ENCODE measurements at regions of chr17 and their contacts with region 1.

Region 1: DNA sequence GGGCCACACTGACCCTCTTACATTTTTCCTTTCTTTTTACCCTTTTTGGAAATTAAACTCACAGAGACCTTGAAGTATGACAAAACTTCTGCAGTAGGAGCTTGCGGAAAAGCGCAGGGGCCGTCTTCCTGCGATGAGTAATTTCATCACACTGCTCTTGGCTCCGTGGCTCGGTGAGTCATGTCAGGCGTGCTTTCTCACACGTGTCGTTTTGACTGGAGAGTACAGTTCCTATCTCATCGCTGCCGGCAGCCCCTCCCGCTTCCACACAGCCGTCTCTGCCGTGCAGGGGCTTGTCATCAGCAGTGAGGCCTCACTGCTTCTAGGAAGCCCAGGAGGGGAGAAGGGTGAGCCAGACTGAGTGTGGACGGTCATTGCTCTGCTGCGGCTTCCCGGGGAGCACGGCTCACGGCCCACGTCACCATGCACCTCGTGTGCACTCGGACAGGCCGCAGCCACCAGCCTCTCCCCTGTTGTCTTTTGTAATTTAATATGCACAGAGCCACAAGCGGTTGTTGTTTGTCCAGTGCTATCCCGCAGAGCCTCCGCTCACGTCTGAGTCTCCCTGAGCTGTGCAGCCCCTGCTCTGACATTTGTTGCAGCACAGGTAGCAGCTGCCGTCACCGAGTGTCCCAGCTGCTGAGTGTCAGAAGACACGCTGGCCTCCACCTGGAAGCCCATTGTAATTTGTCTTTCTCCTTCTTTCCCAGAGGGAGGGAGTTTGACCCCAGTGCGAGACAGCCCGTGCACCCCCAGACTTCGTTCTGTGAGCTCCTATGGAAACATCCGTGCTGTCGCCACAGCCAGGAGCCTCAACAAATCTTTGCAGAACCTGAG is 99.4 kb upstream of the CHMP6 start:
- DNase-seq: peak; percentile 97
- H3K4me3 Mint-ChIP-seq: peak overlapping the region; percentile 23
- H3K27ac Mint-ChIP-seq: peak overlapping the region; percentile 93
- H3K4me1 Mint-ChIP-seq: peaks cover 63% of the 10 kb centered on the region
- H3K27me3 Mint-ChIP-seq: no peaks in the 10 kb centered on the region

Region 2: DNA sequence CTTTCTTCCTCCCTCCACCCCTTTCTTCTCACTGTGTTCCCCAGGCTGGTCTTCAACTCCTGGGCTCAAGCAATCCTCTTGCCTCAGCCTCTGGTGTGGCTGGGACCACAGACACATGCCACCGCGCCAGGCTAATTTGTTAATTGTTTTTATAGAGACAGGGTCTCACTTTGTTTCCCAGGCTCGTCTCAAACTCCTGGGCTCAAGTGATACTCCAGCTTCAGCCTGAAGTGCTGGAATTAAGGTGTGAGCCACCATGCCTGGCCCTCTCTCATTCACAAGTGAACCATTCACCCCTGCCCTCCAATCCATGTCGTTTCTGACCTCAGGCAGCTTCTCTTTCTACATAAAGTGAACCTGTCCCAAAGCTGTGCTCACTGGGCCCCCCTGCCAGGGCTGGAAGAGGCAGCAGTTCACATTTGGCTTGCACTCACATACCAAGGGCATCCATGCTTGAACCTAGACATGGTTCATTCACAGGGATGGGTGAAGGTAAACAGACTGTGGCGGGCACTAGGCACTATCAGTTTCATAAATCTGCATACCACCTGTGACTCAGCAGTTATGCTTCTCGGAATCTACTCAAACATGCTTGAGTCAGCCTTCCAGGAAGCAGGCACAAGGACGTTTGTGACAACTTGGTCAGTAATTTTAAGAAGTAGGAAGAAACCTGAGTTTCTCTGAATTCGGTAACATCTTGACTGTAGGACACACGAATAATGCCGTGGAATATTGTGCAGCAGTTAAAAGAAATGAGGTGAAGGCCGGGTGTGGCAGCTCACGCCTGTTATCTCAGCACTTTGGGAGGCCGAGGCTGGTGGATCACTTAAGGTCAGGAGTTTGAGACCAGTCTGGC is 637.6 kb before region 1 on chr17:
- CTCF ChIA-PET with region 1: no interaction called
- intact Hi-C with region 1: loop called (anchors 5 kb)
- DNase-seq: peak; percentile 90
- H3K4me3 Mint-ChIP-seq: peak overlapping the region; percentile 34
- H3K27ac Mint-ChIP-seq: peak overlapping the region; percentile 92
- H3K4me1 Mint-ChIP-seq: peaks cover 63% of the 10 kb centered on the region
- H3K27me3 Mint-ChIP-seq: no peaks in the 10 kb centered on the region

Region 3: DNA sequence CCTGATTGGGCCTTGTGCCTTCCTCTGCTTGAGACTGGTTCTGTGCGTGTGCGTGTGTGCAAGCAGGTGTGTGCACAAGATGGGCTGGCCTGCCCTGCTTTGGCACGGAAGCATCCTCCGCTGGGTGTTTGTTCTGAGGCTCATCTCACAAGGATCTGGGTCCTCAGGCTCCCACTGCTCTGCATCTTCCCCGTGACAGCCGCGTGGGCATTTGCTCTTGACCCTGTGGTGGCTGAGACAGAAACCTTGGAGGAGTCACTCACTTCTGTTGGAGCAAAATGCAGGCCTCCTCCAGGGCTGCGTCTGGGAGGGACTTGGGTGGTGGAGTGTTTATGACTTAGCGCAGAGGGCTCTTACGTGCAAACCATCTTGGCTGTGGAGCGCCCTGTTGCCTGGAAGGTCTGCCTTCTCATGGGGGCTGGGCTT is 228.4 kb before region 1 on chr17:
- CTCF ChIA-PET with region 1: no interaction called
- intact Hi-C with region 1: loop called (anchors 1 kb)
- DNase-seq: peak; percentile 67
- H3K4me3 Mint-ChIP-seq: peak overlapping the region; percentile 51
- H3K27ac Mint-ChIP-seq: peak overlapping the region; percentile 86
- H3K4me1 Mint-ChIP-seq: peaks cover 73% of the 10 kb centered on the region
- H3K27me3 Mint-ChIP-seq: no peaks in the 10 kb centered on the region

Region 4: DNA sequence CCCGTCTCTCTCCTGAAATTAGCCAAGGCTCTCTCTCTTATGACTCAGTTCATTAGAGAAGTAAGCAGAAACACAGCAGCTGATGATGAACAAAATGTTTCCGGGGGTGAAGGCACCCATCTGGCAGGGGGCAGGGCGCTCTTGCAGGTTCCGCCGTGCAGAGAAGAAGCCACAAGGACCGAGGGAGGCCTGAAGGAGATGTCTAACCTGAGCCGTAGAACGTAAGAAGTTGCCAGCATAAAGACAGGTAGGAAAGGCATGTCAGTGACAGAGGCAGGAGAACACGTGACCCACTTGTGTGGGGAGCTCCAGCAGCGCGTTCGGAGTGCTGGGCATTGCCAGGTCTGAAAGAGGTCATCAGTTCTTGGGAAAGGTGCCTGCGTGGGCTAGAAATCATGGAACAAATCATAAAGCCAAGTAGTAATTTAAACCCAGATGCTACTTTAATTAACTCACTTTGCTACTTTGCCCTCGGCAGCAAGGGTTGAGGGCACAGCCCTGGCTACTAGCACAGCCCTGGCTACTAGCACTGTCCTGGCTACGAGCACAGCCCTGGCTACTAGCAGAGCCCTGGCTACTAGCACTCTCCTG is 149.0 kb before region 1 on chr17:
- CTCF ChIA-PET with region 1: no interaction called
- intact Hi-C with region 1: loop called (anchors 5 kb)
- DNase-seq: peak; percentile 78
- H3K4me3 Mint-ChIP-seq: peak overlapping the region; percentile 55
- H3K27ac Mint-ChIP-seq: peak overlapping the region; percentile 85
- H3K4me1 Mint-ChIP-seq: peaks cover 58% of the 10 kb centered on the region
- H3K27me3 Mint-ChIP-seq: no peaks in the 10 kb centered on the region

Region 5: DNA sequence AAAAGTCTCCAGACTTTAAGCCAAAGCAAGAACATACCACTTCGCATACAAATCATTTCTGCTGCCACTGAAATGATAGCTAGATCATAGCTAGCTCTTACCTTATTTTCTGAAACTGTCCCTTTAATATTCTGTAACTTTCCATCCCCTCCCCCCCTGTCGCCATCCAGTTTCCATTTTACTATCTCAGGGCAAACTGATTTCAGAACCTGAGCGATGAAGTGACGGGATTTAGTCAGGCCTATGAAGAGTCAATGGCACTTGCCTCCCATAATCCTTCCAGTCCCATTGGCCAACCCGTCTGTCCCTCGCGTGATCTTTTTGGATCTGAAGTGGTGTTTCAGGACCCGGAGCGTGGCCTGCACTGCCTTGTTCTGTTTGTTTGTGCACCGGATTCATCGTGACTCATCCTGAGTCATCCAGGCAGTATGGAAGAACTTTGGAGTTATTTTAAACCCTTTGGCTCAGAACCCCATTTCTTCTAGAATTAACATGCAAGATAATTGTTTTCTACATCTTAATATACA is 100.4 kb before region 1 on chr17:
- CTCF ChIA-PET with region 1: no interaction called
- intact Hi-C with region 1: loop called (anchors 1 kb)
- DNase-seq: peak; percentile 77
- H3K4me3 Mint-ChIP-seq: peak overlapping the region; percentile 58
- H3K27ac Mint-ChIP-seq: peak overlapping the region; percentile 94
- H3K4me1 Mint-ChIP-seq: peaks cover 87% of the 10 kb centered on the region
- H3K27me3 Mint-ChIP-seq: no peaks in the 10 kb centered on the region

Region 6: GRCh38 chr17:80855948-80856862 is 36.0 kb before region 1 on chr17:
- CTCF ChIA-PET with region 1: interaction called, 4 read pairs
- intact Hi-C with region 1: loop called (anchors 1 kb)
- DNase-seq: peak; percentile 96
- H3K4me3 Mint-ChIP-seq: peak overlapping the region; percentile 9
- H3K27ac Mint-ChIP-seq: peak overlapping the region; percentile 94
- H3K4me1 Mint-ChIP-seq: peaks cover 75% of the 10 kb centered on the region
- H3K27me3 Mint-ChIP-seq: no peaks in the 10 kb centered on the region

Region 7: GRCh38 chr17:80868022-80868609 is 24.1 kb before region 1 on chr17:
- CTCF ChIA-PET with region 1: no interaction called
- intact Hi-C with region 1: no loop called
- DNase-seq: no peak
- H3K4me3 Mint-ChIP-seq: no peak overlapping the region
- H3K27ac Mint-ChIP-seq: peak overlapping the region; percentile 33
- H3K4me1 Mint-ChIP-seq: peaks cover 79% of the 10 kb centered on the region
- H3K27me3 Mint-ChIP-seq: no peaks in the 10 kb centered on the region

Region 8: GRCh38 chr17:80908776-80909175 is 16.5 kb after region 1 on chr17:
- CTCF ChIA-PET with region 1: no interaction called
- intact Hi-C with region 1: no loop called
- DNase-seq: no peak
- H3K4me3 Mint-ChIP-seq: no peak overlapping the region
- H3K27ac Mint-ChIP-seq: no peak overlapping the region
- H3K4me1 Mint-ChIP-seq: no peaks in the 10 kb centered on the region
- H3K27me3 Mint-ChIP-seq: no peaks in the 10 kb centered on the region

Region 9: DNA sequence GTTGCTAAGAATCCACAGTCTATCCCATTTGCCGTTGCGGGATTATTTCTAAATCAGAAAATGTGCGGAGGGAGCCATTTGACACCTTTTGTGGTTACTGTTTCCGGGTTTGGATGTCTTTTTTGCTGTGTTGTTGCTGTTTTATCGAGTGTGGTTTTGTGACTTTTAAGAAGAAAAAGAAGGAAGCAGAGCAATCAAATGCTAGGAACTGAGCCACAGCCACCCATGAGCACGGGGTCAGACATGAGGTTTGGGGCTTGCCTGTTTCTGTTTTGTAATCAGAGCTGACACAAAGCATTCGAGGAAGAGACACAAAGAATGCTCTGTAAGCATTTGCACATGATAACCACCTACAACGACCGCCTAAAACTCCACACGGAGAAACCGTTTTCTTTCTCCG is 46.3 kb after region 1 on chr17:
- CTCF ChIA-PET with region 1: no interaction called
- intact Hi-C with region 1: loop called (anchors 1 kb)
- DNase-seq: peak; percentile 71
- H3K4me3 Mint-ChIP-seq: no peak overlapping the region
- H3K27ac Mint-ChIP-seq: peak overlapping the region; percentile 32
- H3K4me1 Mint-ChIP-seq: peaks cover 40% of the 10 kb centered on the region
- H3K27me3 Mint-ChIP-seq: no peaks in the 10 kb centered on the region